ENCODE measurements at regions of chr6 and their contacts with region 1.

Region 1: DNA sequence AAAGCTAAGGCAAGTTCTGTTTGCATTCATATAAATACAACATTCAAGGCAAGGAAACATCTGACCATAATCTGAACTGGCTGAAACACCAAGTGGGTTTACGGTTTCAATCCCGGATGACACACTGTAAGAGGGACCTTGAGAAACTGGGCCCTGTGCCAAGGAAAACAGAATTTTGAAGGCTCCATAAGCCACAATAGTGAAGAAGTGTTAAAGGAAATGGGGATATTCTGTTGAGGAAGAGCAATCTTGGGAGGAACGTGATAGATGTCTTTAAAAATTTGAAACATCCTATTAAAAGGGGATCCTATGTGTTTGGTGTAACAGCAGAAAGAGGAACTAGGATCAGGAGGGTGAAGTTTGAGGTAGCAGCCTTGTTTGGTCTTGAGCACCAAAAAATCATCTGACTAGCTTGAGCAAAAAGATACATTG is 82.4 kb upstream of the TAB2 start:
- DNase-seq: no peak
- H3K4me3 Mint-ChIP-seq: peak overlapping the region; percentile 75
- H3K27ac Mint-ChIP-seq: peak overlapping the region; percentile 97
- H3K4me1 Mint-ChIP-seq: peaks cover 71% of the 10 kb centered on the region
- H3K27me3 Mint-ChIP-seq: no peaks in the 10 kb centered on the region

Region 2: GRCh38 chr6:149026530-149026942 is 208.6 kb before region 1 on chr6:
- intact Hi-C with region 1: no loop called
- DNase-seq: no peak
- H3K4me3 Mint-ChIP-seq: no peak overlapping the region
- H3K27ac Mint-ChIP-seq: no peak overlapping the region
- H3K4me1 Mint-ChIP-seq: peaks cover 33% of the 10 kb centered on the region
- H3K27me3 Mint-ChIP-seq: no peaks in the 10 kb centered on the region

Region 3: DNA sequence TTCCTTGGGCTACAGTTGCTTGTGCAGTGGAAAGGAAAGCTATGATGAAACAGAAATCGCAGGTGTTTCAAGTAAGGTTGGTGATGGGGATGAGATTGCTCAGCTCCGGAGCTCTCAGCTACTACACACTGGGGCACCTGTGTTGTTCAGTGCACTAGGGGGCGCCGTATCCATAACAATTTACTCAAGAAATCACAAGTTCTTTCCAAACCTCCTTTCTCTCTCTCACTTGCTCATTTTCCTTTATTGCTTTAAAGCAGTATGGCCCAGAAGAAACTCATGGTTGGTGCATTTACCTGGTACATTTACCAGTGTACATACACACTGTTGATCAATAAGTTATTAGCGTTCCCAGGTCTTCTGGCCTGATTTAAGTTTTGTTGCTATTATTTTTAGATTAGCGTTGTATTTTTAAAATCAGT is 152.8 kb before region 1 on chr6:
- intact Hi-C with region 1: loop called (anchors 1 kb)
- DNase-seq: peak; percentile 81
- H3K4me3 Mint-ChIP-seq: peak overlapping the region; percentile 80
- H3K27ac Mint-ChIP-seq: peak overlapping the region; percentile 92
- H3K4me1 Mint-ChIP-seq: peaks cover 89% of the 10 kb centered on the region
- H3K27me3 Mint-ChIP-seq: no peaks in the 10 kb centered on the region

Region 4: DNA sequence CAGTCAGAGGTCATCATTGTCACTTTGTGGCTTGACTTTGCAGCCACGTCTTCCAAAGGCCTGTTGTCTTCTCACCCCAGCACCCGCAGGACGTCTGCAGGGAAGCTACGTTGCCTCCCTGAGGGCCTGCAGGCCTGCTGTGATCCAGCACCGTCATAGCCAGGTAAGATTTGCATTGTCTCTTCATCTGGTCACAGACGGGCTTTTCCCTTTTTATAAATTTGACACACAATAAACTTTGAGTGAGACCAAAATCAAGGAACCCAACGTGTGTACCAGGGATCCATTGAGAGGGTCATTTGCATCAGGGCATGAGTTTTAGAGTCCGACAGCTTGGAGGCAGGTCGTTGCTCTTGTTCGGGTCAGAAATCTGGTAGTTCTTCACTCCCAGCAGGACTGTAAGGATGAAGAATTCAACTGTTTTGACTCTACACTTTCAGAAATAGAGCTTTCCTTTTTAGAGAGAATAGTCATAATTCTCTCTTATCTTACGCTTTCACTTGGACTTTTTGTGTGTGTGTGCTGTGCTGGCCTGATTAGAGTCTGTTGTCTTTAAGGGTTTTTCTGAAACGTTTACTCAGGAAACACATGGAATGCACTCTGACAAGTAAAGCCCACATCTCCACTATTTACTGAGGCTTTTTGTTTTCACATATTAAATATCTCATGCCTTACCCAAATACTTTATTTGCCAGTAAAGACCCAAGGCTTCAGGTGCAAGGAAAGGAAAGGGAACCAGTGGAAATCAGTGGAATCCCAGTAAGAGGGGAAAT is 94.8 kb before region 1 on chr6:
- intact Hi-C with region 1: loop called (anchors 1 kb)
- DNase-seq: peak; percentile 62
- H3K4me3 Mint-ChIP-seq: peak overlapping the region; percentile 84
- H3K27ac Mint-ChIP-seq: peak overlapping the region; percentile 100
- H3K4me1 Mint-ChIP-seq: peaks cover 64% of the 10 kb centered on the region
- H3K27me3 Mint-ChIP-seq: no peaks in the 10 kb centered on the region

Region 5: DNA sequence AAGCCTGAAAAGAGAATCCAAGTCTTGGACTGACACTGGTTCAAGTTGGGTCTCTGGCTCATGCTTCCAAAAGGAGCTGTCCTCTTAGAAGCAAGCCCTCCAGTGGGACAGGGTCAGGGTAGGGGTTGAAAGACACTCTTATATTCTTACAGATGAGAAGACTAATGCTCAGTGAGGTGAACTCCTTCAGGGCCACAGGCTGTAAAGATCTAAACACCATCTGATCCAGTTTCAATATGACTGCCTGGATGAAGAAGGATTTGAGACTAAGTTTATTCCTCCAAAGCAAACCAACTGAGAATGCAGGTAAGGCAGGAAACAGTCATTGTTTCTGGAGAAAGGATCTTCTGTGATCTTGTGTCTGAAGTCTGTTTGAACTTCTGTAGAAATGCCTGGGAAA is 16.7 kb before region 1 on chr6:
- intact Hi-C with region 1: loop called (anchors 1 kb)
- DNase-seq: no peak
- H3K4me3 Mint-ChIP-seq: peak overlapping the region; percentile 45
- H3K27ac Mint-ChIP-seq: peak overlapping the region; percentile 77
- H3K4me1 Mint-ChIP-seq: peaks cover 56% of the 10 kb centered on the region
- H3K27me3 Mint-ChIP-seq: no peaks in the 10 kb centered on the region

Region 6: GRCh38 chr6:149335924-149336608 is 100.9 kb after region 1 on chr6:
- intact Hi-C with region 1: loop called (anchors 1 kb)
- DNase-seq: peak; percentile 22
- H3K4me3 Mint-ChIP-seq: peak overlapping the region; percentile 76
- H3K27ac Mint-ChIP-seq: peak overlapping the region; percentile 93
- H3K4me1 Mint-ChIP-seq: peaks cover 94% of the 10 kb centered on the region
- H3K27me3 Mint-ChIP-seq: no peaks in the 10 kb centered on the region

Region 7: GRCh38 chr6:149484733-149485700 is 249.9 kb after region 1 on chr6 and contains the start of gene ZC3H12D:
- intact Hi-C with region 1: loop called (anchors 1 kb)
- DNase-seq: peak; percentile 76
- H3K4me3 Mint-ChIP-seq: peak within 1 kb of the TSS; percentile 92
- H3K27ac Mint-ChIP-seq: peak within 1 kb of the TSS; percentile 99
- H3K4me1 Mint-ChIP-seq: peaks cover 74% of the 10 kb centered on the region
- H3K27me3 Mint-ChIP-seq: no peaks in the 10 kb centered on the region
- total RNA-seq, gene ZC3H12D: 94.7 and 96.7 TPM in 2 replicates

Region 8: DNA sequence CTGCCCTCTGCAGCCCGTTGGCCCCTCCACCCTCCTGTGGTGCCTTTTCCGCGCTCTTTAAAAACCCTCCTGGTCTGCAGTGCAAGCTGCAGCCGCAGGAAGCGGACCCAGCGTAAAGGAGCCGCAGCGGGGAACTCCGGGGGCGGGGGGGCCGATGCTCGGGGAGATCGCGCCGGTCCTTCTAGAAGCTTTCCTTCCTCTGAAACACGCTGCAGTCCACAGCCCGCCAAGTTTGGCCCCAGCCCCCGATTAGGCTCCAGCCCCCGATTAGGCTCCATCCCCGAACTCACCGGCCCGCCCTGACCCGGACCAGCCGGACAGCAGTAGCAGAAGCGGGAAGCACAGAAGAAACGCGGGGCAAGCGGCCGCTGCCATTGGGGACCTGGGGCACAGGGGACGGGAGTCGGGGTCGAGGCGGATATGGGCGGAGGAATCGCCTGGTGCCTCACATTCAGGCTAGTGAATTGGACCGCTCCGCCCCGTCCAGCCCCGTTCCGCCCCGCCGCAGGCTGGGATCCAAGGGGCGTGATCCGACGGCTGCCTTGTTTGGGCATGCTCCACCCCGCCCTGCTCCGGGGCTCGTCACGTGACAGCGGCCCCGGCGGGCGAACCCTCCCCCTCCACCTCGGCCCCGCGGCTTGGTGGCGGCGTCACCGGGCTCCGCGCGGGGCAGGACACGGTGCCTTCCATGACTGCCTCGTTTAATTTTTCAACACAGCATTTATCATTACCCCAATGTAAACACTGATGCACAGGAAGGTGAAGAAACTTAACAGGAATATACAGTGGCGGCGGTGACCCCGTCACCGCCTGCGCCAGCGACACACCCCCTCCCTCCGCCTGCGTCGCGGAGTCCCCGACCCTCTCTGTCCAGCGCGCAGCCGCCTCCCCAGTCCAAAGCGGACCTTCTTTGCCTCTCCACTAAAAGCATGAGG is 769.9 kb after region 1 on chr6:
- intact Hi-C with region 1: loop called (anchors 5 kb)
- DNase-seq: peak; percentile 92
- H3K4me3 Mint-ChIP-seq: peak overlapping the region; percentile 82
- H3K27ac Mint-ChIP-seq: peak overlapping the region; percentile 87
- H3K4me1 Mint-ChIP-seq: peaks cover 62% of the 10 kb centered on the region
- H3K27me3 Mint-ChIP-seq: peaks cover 22% of the 10 kb centered on the region

Measured in activated T-helper 1 cell treated with anti-CD3 and anti-CD28 coated beads, Interleukin-12 subunit alpha, Interleukin-12 subunit beta, Interleukin-2, Interleukin-4 antibody, amounts not matched to agents 30 ng/mL and 10 ng/mL and 1 ng/mL, durations not matched to agents 14 hours and 24 hours and 36 hours (primary cell).